Dorsolateral prefrontal cortex (tissue), 120 donors: ENCODE measurements at regions of chr3 and their contacts with region 1.

Region 1: DNA sequence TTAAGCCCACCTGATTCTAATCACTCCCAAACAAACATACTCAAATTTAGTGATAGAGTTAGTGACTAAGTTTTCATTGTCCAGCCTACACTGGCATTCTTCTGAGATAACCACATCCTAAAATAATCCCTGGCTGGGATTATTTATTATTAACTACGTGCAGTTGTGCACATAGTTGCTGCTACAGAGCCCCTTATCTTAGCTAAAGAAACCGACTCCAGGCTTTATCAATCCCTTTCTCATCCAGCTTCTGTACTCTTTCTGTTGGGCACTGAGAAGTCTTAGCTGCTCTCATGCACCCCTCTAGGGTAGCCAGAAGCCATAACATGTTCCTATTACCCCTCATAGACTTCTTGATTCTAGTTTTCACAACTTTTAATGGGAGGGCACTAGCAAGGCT is 208.7 kb downstream of the MBNL1 start:
- DNase-seq: no peak
- H3K4me3 ChIP-seq: no peak overlapping the region
- H3K27ac ChIP-seq: no peak overlapping the region
- H3K27me3 ChIP-seq: no peaks in the 10 kb centered on the region
- CTCF ChIP-seq: no peak

Region 2: GRCh38 chr3:152430223-152431002 is 47.0 kb before region 1 on chr3:
- intact Hi-C with region 1: no loop called
- DNase-seq: no peak
- H3K4me3 ChIP-seq: peak overlapping the region in 4 of 59 donors; percentile 6 to 28 (median 15)
- H3K27ac ChIP-seq: peak overlapping the region in 39 of 59 donors; percentile 8 to 64 (median 40)
- H3K27me3 ChIP-seq: no peaks in the 10 kb centered on the region
- CTCF ChIP-seq: no peak

Region 3: DNA sequence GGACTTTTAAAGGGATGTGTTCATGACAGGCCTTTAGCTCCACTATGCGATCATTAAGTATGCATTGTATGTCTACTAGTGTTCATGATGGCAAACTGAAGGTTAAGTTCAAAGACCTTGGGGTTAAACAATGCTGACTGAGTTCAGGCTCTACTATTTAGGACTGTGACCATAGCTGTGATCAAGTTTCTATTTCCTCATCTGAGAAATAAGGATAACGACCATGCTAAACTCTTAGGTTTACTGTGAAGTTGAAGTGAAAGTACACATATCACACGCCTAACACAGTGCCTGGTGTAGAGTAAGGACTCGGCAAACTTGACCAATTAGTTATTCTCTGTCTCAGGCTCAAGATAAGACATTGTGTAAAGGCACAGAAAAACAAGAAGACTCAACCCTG is 34.5 kb after region 1 on chr3:
- intact Hi-C with region 1: loop called in 1 of 2 experiments (anchors 5 kb)
- DNase-seq: no peak
- H3K4me3 ChIP-seq: no peak overlapping the region
- H3K27ac ChIP-seq: no peak overlapping the region
- H3K27me3 ChIP-seq: no peaks in the 10 kb centered on the region
- CTCF ChIP-seq: no peak